GM13976 (cell line): ENCODE measurements at regions of chr3 and their contacts with region 1.

Region 1: GRCh38 chr3:155890671-155891190 is 20.3 kb downstream of the GMPS start:
- DNase-seq: no peak
- CTCF ChIP-seq: no peak

Region 2: DNA sequence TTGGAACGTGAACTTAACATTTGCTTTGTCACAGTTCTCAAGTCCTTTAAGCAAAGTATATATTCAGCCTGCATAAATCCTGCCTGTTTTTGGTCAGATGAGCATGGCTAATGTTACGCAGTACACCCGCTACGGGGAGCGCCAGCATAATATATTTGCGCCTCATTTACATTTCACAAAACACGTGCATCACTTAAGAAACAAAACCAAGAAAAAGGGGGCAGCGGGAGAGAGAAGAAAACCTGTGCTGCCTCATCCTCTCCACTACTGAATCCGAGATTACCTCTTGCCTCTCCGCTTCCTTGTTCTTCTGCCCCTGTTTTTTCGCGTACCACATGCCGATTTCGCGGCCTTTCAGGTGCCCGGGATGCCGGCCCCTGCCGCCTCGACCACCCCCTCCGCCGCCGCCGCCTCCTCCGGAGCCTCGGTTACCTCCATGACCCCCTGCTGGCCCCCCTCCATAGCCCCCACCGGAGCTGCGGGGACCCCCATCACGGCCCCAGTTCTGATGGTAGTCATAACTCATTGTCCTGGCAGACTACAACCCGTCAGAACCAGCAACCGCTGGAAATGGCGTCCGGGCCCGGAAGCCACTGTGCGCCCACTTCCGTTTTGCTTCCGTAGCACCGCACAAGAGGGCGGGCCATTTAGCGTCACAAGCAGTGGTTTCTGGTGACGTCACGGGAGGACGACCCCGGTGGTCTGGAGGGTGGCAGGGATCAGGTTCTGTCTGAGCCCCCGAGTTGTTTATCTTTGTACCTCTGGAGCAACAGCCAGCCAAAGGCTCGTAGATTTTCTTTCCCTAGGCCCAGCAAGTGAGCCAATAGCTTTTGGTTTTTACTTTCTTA is 1566.6 kb before region 1 on chr3 and contains the start of gene DHX36:
- in situ Hi-C with region 1: loop called (anchors 25 kb)
- DNase-seq: peak; percentile 87
- CTCF ChIP-seq: no peak

Region 3: DNA sequence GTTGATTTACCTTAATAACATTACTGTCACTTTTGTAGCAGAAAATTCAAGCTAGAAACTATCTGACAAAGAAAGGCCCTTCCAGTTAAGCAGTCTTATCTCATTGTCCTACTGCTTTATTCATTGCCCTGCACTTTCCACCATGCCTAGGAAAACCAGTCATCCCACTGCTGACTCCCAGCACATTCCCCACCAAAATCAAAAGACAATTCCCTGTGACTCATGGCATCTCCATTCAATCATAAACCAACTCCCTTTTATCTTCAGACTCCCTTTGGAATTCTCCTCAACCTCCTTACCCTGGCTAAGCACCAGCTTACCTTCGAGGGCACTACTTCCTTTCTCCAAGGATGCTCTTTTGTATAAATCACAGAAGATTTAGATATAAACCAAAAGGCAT is 330.1 kb before region 1 on chr3:
- in situ Hi-C with region 1: no loop called
- DNase-seq: no peak
- CTCF ChIP-seq: no peak